Aorta (tissue), 5 donors: ENCODE measurements at regions of chr3 and their contacts with region 1.

Region 1: GRCh38 chr3:172153335-172153861 is 114.0 kb downstream of the FNDC3B start:
- DNase-seq: peak; percentile 95
- ATAC-seq: peak; percentile 99
- H3K4me3 ChIP-seq: no peak overlapping the region
- H3K27ac ChIP-seq: peak overlapping the region; percentile 96 to 99
- H3K4me1 ChIP-seq: peaks cover 6 to 15% of the 10 kb centered on the region in 2 donors
- H3K27me3 ChIP-seq: no peaks in the 10 kb centered on the region

Region 2: DNA sequence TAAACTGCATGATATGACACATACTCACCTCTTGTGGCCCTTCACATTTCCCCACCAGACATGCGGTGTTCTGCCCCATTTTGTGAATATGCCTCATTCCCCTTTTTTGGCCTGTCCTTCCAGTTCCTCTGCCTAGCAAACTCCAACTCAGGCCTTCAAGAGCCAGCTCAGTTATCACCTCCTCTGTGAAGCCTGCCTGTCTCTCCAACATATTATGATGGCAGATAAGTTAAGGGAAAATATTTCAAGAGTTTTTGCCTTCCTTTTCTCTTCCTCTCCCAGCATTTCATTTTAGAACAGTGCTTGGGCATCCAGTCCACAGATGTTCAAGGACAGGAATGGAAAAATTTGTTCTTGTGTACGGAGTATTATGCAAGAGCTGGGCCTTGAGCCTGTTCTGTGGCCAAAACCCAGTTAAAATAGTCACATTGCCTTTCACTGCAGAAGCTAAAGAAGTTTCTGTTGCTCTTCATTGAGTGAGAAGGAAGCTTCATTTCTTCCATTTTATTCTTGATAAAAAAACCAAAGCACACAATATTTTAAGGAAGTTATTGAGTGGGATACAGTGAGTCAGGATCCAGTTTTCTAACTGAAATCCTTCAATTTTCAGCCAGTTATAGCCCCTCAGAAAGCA is 102.8 kb after region 1 on chr3:
- intact Hi-C with region 1: loop called in 1 of 2 experiments (anchors 10 kb)
- DNase-seq: no peak
- ATAC-seq: peak; percentile 82
- H3K4me3 ChIP-seq: no peak overlapping the region
- H3K27ac ChIP-seq: peak overlapping the region; percentile 53 to 92
- H3K4me1 ChIP-seq: peaks cover 15 to 17% of the 10 kb centered on the region in 2 donors
- H3K27me3 ChIP-seq: no peaks in the 10 kb centered on the region